GM12878 (cell line): ENCODE measurements at regions of chr9 and their contacts with region 1.

Region 1: DNA sequence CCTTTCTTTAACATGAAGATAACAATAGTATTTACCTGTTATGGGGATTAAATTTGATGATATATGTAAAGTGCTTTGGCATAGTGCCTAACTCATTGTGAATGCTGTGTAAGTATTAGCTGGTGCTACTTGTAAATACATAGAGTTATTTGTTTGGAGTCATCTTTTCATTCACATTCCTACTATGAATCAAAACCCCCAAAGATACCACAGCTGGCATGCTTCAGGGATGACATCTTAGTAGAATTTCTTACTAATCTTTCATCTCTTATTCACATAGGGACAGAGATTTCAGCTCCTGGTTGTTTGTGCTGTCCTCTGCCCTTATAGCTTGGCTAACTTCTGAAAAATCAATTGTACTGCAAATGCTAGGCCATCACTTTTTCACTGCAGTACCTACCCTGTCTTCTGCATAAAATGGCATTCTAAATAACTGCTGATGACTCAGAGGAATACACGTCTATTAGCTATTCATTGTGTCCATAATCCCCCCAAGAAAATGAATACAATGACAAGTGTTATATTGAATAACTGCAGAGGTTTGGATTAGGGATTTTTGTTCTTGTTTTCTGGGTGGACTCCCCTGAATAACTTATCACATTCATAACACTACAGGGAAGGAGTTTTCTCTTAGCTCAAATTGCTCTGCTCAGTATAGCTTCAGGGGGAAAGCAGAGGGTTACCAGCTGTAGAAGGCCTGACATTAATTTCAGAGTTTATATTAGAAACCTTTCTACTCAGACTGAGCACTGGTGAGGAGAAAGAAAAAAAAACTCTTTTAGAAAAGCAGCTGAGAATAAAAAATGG is 192.2 kb upstream of the C9orf72 start:
- DNase-seq: no peak
- ATAC-seq: no peak; the same call in 2 of the 3 replicates
- H3K4me3 ChIP-seq: no peak overlapping the region
- H3K27ac ChIP-seq: no peak overlapping the region
- H3K4me1 ChIP-seq: no peaks in the 10 kb centered on the region
- H3K27me3 ChIP-seq: no peaks in the 10 kb centered on the region
- CTCF ChIP-seq: no peak
- EP300 ChIP-seq: no peak
- POLR2A ChIP-seq: no peak
- RAD21 ChIP-seq: no peak

Region 2: DNA sequence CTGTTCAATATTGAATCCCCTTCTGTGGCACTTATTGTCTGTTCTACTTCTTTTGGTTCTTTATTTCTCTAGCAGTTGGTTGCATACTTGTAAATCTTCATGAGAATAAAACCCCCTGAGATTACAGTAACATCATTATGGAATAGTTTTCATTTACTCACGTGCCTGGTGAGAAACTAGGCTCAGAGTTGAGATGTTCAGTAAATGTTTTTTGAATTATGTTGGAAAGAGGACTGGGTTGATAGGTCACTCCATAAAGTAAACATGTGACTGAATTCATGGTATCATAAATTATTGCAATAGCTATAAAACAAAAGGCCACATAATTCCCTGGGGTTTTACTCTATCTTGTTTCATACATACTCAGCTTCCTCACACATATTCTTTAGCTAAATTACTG is 18.0 kb before region 1 on chr9:
- CTCF ChIA-PET with region 1: no interaction called
- POLR2A ChIA-PET with region 1: no interaction called
- RAD21 ChIA-PET with region 1: no interaction called
- SMC1A ChIA-PET with region 1: interaction called, 15 read pairs
- in situ Hi-C with region 1: no loop called
- intact Hi-C with region 1: no loop called
- DNase-seq: no peak
- ATAC-seq: no peak
- H3K4me3 ChIP-seq: no peak overlapping the region
- H3K27ac ChIP-seq: no peak overlapping the region
- H3K4me1 ChIP-seq: no peaks in the 10 kb centered on the region
- H3K27me3 ChIP-seq: no peaks in the 10 kb centered on the region
- CTCF ChIP-seq: no peak
- EP300 ChIP-seq: no peak
- POLR2A ChIP-seq: no peak
- RAD21 ChIP-seq: no peak

Region 3: GRCh38 chr9:27785714-27786100 is 20.2 kb after region 1 on chr9:
- CTCF ChIA-PET with region 1: interaction called, 3 read pairs
- POLR2A ChIA-PET with region 1: interaction called, 6 read pairs
- RAD21 ChIA-PET with region 1: interaction called, 6 read pairs
- SMC1A ChIA-PET with region 1: interaction called, 14 read pairs
- in situ Hi-C with region 1: no loop called
- intact Hi-C with region 1: no loop called
- DNase-seq: peak; percentile 23
- ATAC-seq: peak; percentile 93
- H3K4me3 ChIP-seq: no peak overlapping the region
- H3K27ac ChIP-seq: no peak overlapping the region
- H3K4me1 ChIP-seq: no peaks in the 10 kb centered on the region
- H3K27me3 ChIP-seq: no peaks in the 10 kb centered on the region
- CTCF ChIP-seq: no peak
- EP300 ChIP-seq: no peak
- POLR2A ChIP-seq: no peak
- RAD21 ChIP-seq: no peak

Region 4: GRCh38 chr9:27791311-27791710 is 25.8 kb after region 1 on chr9:
- CTCF ChIA-PET with region 1: interaction called, 3 read pairs
- POLR2A ChIA-PET with region 1: interaction called, 6 read pairs
- RAD21 ChIA-PET with region 1: interaction called, 6 read pairs
- SMC1A ChIA-PET with region 1: interaction called, 14 read pairs
- in situ Hi-C with region 1: no loop called
- intact Hi-C with region 1: no loop called
- DNase-seq: no peak
- ATAC-seq: peak; percentile 52; the same call in 2 of the 3 replicates
- H3K4me3 ChIP-seq: no peak overlapping the region
- H3K27ac ChIP-seq: no peak overlapping the region
- H3K4me1 ChIP-seq: no peaks in the 10 kb centered on the region
- H3K27me3 ChIP-seq: no peaks in the 10 kb centered on the region
- CTCF ChIP-seq: no peak
- EP300 ChIP-seq: no peak
- POLR2A ChIP-seq: no peak
- RAD21 ChIP-seq: no peak